Ovary (tissue), 10 donors: ENCODE measurements at regions of chr1 and their contacts with region 1.

Region 1: GRCh38 chr1:183871142-183871541 is 66.2 kb downstream of the RGL1 start:
- DNase-seq: no peak
- H3K4me3 ChIP-seq: no peak overlapping the region
- H3K27ac ChIP-seq: peak overlapping the region; percentile 82 to 88
- H3K4me1 ChIP-seq: peaks cover 24% of the 10 kb centered on the region
- H3K27me3 ChIP-seq: no peaks in the 10 kb centered on the region
- CTCF ChIP-seq: no peak
- EP300 ChIP-seq: no peak
- POLR2A ChIP-seq: no peak

Region 2: DNA sequence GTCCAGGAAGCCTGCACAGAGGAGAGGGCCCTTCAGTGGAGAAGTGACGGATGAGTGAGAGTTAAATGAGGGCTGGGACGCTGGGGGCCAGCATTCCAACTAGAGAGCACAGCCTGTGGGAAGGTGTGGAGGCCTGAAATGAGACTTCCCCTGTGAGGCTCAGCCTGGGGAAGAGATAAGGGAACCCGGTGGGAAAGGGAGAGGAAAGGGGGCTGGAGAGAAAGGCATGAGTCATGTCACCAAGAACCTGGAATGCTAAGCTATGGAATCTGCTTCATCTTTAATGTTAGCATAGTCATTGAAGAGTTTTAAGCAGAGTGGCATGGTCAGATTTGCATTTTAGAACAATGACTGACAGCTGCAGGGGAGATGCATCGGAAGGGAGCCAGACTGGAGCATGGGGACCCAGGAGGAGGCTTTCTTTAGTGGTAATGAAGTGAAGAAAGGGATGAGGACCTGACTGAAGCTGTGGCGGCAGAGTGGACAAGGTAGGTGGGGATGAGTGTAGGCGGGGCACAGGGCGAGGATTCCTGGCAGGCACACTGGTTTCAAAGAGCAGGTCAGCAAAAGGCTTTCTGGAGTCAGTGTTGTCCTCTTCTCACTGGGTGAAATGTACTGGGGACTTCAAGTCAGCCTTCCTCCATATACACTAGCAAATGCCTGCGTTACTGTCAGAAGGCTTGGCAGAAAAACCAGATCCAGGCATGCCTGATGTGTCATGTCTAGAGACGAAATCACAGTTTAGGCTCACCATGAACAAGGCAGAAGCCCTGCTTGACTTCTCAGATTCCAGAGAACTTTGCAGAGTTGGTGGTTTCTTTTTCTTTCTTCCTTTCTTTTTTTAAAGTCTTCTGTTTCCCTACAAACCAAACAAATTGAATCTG is 58.2 kb before region 1 on chr1:
- intact Hi-C with region 1: loop called in 2 of 4 experiments (anchors 10 kb)
- DNase-seq: no peak
- H3K4me3 ChIP-seq: no peak overlapping the region
- H3K27ac ChIP-seq: no peak overlapping the region
- H3K4me1 ChIP-seq: peaks cover 22% of the 10 kb centered on the region
- H3K27me3 ChIP-seq: no peaks in the 10 kb centered on the region
- CTCF ChIP-seq: no peak
- EP300 ChIP-seq: no peak
- POLR2A ChIP-seq: no peak